Naive thymus-derived CD4-positive, alpha-beta T cell (primary cell): ENCODE measurements at regions of chr4 and their contacts with region 1.

Region 1: GRCh38 chr4:140153718-140154571 is at the start of gene MAML3:
- DNase-seq: peak; percentile 73 to 89 (median 83)
- ATAC-seq: peak; percentile 58
- H3K4me3 ChIP-seq: peak within 1 kb of the TSS; percentile 99
- H3K4me3 Mint-ChIP-seq: peak within 1 kb of the TSS; percentile 89 to 100 (median 96)
- H3K27ac ChIP-seq: peak within 1 kb of the TSS; percentile 84
- H3K27ac Mint-ChIP-seq: peak within 1 kb of the TSS; percentile 81 to 96 (median 93)
- H3K4me1 ChIP-seq: peaks cover 0 to 13% of the 10 kb centered on the region in 2 donors
- H3K4me1 Mint-ChIP-seq: peaks cover 4 to 47% (median 32%) of the 10 kb centered on the region in 7 donors
- H3K27me3 ChIP-seq: no peaks in the 10 kb centered on the region
- H3K27me3 Mint-ChIP-seq: peaks cover 0 to 75% (median 0%) of the 10 kb centered on the region in 5 donors
- total RNA-seq, gene MAML3: 1.4 to 9.4 (median 3.6) TPM

Region 2: DNA sequence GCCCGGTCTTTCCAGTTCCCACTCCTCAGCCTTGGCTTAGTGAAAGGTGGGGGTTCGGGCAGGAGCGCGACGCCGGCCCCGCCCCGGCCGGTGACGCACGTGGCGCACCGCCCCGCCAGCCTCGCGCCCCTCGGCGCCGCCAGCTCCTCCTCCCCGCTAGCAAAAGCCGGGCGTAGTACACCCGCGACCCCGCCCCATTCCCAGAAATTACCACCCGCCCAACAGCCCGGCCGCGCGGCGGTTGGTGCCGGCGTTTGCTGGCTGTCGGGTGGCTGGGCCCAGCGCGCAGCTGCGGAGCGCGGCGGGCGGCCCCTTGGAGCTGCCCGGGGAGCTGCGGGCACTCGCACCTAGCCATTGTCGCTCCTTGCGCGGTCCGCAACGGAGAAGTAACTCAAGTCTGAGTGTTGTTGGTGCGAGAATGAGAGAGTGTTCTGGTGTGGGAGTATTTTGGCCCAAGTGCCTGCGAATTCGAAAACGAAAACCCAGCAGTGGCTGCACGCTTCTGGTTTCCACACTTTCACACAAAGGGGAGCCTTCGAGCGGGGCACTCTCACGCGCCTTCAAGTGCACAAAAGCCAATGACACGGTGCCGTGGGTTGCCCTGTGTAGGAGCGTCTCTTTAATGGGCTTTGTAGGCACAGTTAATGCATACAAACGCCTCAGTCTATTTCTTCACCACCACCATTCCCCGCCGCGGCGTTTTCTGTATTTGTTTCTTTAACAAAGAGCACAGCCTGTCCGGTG is 975.9 kb before region 1 on chr4:
- CTCF ChIA-PET with region 1: no interaction called
- POLR2A ChIA-PET with region 1: no interaction called
- intact Hi-C with region 1: loop called (anchors 2 kb)
- DNase-seq: peak; percentile 84 to 98 (median 92)
- ATAC-seq: peak; percentile 84
- H3K4me3 ChIP-seq: peak overlapping the region; percentile 71
- H3K4me3 Mint-ChIP-seq: peak overlapping the region; percentile 86 to 95 (median 91)
- H3K27ac ChIP-seq: peak overlapping the region; percentile 86
- H3K27ac Mint-ChIP-seq: peak overlapping the region; percentile 90 to 97 (median 94)
- H3K4me1 ChIP-seq: peaks cover 0 to 11% of the 10 kb centered on the region in 2 donors
- H3K4me1 Mint-ChIP-seq: peaks cover 0 to 31% (median 17%) of the 10 kb centered on the region in 7 donors
- H3K27me3 ChIP-seq: no peaks in the 10 kb centered on the region
- H3K27me3 Mint-ChIP-seq: peaks cover 0 to 44% (median 0%) of the 10 kb centered on the region in 5 donors

Region 3: GRCh38 chr4:139656614-139657486 is 497.1 kb before region 1 on chr4:
- CTCF ChIA-PET with region 1: no interaction called
- POLR2A ChIA-PET with region 1: no interaction called
- intact Hi-C with region 1: loop called (anchors 1 to 5 kb)
- DNase-seq: peak in 8 of 9 donors; percentile 29 to 67 (median 56)
- ATAC-seq: peak; percentile 87
- H3K4me3 ChIP-seq: no peak overlapping the region
- H3K4me3 Mint-ChIP-seq: peak overlapping the region in 8 of 10 donors; percentile 5 to 86 (median 22)
- H3K27ac ChIP-seq: no peak overlapping the region
- H3K27ac Mint-ChIP-seq: peak overlapping the region in 5 of 9 donors; percentile 31 to 98 (median 87)
- H3K4me1 ChIP-seq: peaks cover 0 to 5% of the 10 kb centered on the region in 2 donors
- H3K4me1 Mint-ChIP-seq: peaks cover 17 to 41% (median 18%) of the 10 kb centered on the region in 7 donors
- H3K27me3 ChIP-seq: no peaks in the 10 kb centered on the region
- H3K27me3 Mint-ChIP-seq: peaks cover 0 to 5% (median 5%) of the 10 kb centered on the region in 5 donors

Region 4: GRCh38 chr4:140004549-140004895 is 149.4 kb before region 1 on chr4:
- CTCF ChIA-PET with region 1: no interaction called
- POLR2A ChIA-PET with region 1: no interaction called
- intact Hi-C with region 1: no loop called
- DNase-seq: no peak
- ATAC-seq: no peak
- H3K4me3 ChIP-seq: no peak overlapping the region
- H3K4me3 Mint-ChIP-seq: no peak overlapping the region
- H3K27ac ChIP-seq: no peak overlapping the region
- H3K27ac Mint-ChIP-seq: no peak overlapping the region
- H3K4me1 ChIP-seq: no peaks in the 10 kb centered on the region
- H3K4me1 Mint-ChIP-seq: no peaks in the 10 kb centered on the region
- H3K27me3 ChIP-seq: no peaks in the 10 kb centered on the region
- H3K27me3 Mint-ChIP-seq: peaks cover 0 to 51% (median 17%) of the 10 kb centered on the region in 5 donors

Region 5: GRCh38 chr4:140049024-140049848 is 104.7 kb before region 1 on chr4:
- CTCF ChIA-PET with region 1: interaction called, 4 read pairs
- POLR2A ChIA-PET with region 1: interaction called, 7 read pairs
- intact Hi-C with region 1: loop called (anchors 1 kb)
- DNase-seq: peak in 8 of 9 donors; percentile 13 to 73 (median 61)
- ATAC-seq: peak; percentile 92
- H3K4me3 ChIP-seq: peak overlapping the region; percentile 45
- H3K4me3 Mint-ChIP-seq: peak overlapping the region; percentile 76 to 93 (median 86)
- H3K27ac ChIP-seq: peak overlapping the region; percentile 46
- H3K27ac Mint-ChIP-seq: peak overlapping the region; percentile 77 to 94 (median 82)
- H3K4me1 ChIP-seq: peaks cover 3 to 14% of the 10 kb centered on the region in 2 donors
- H3K4me1 Mint-ChIP-seq: peaks cover 7 to 60% (median 41%) of the 10 kb centered on the region in 7 donors
- H3K27me3 ChIP-seq: no peaks in the 10 kb centered on the region
- H3K27me3 Mint-ChIP-seq: peaks cover 0 to 64% (median 0%) of the 10 kb centered on the region in 5 donors

Region 6: GRCh38 chr4:140116442-140117104 is 37.4 kb before region 1 on chr4:
- CTCF ChIA-PET with region 1: interaction called, 3 read pairs
- POLR2A ChIA-PET with region 1: interaction called, 3 read pairs
- intact Hi-C with region 1: loop called (anchors 1 to 2 kb)
- DNase-seq: no peak
- ATAC-seq: peak; percentile 79
- H3K4me3 ChIP-seq: no peak overlapping the region
- H3K4me3 Mint-ChIP-seq: peak overlapping the region in 6 of 10 donors; percentile 3 to 37 (median 18)
- H3K27ac ChIP-seq: no peak overlapping the region
- H3K27ac Mint-ChIP-seq: peak overlapping the region in 6 of 9 donors; percentile 6 to 60 (median 24)
- H3K4me1 ChIP-seq: peaks cover 0 to 7% of the 10 kb centered on the region in 2 donors
- H3K4me1 Mint-ChIP-seq: peaks cover 15 to 23% (median 18%) of the 10 kb centered on the region in 7 donors
- H3K27me3 ChIP-seq: no peaks in the 10 kb centered on the region
- H3K27me3 Mint-ChIP-seq: peaks cover 0 to 14% (median 0%) of the 10 kb centered on the region in 5 donors

Region 7: GRCh38 chr4:140252742-140253555 is 99.0 kb after region 1 on chr4:
- CTCF ChIA-PET with region 1: interaction called, 5 read pairs
- POLR2A ChIA-PET with region 1: interaction called, 3 read pairs
- intact Hi-C with region 1: loop called (anchors 1 kb)
- DNase-seq: peak; percentile 29 to 78 (median 60)
- ATAC-seq: peak; percentile 78
- H3K4me3 ChIP-seq: peak overlapping the region; percentile 44
- H3K4me3 Mint-ChIP-seq: peak overlapping the region; percentile 42 to 85 (median 80)
- H3K27ac ChIP-seq: peak overlapping the region; percentile 29
- H3K27ac Mint-ChIP-seq: peak overlapping the region in 2 of 9 donors; percentile 30 to 33
- H3K4me1 ChIP-seq: no peaks in the 10 kb centered on the region
- H3K4me1 Mint-ChIP-seq: peaks cover 2 to 31% (median 11%) of the 10 kb centered on the region in 7 donors
- H3K27me3 ChIP-seq: peaks cover 0 to 7% of the 10 kb centered on the region in 2 donors
- H3K27me3 Mint-ChIP-seq: peaks cover 0 to 19% (median 3%) of the 10 kb centered on the region in 5 donors